AG04449 (cell line): ENCODE measurements at regions of chr22 and their contacts with region 1.

Region 1: DNA sequence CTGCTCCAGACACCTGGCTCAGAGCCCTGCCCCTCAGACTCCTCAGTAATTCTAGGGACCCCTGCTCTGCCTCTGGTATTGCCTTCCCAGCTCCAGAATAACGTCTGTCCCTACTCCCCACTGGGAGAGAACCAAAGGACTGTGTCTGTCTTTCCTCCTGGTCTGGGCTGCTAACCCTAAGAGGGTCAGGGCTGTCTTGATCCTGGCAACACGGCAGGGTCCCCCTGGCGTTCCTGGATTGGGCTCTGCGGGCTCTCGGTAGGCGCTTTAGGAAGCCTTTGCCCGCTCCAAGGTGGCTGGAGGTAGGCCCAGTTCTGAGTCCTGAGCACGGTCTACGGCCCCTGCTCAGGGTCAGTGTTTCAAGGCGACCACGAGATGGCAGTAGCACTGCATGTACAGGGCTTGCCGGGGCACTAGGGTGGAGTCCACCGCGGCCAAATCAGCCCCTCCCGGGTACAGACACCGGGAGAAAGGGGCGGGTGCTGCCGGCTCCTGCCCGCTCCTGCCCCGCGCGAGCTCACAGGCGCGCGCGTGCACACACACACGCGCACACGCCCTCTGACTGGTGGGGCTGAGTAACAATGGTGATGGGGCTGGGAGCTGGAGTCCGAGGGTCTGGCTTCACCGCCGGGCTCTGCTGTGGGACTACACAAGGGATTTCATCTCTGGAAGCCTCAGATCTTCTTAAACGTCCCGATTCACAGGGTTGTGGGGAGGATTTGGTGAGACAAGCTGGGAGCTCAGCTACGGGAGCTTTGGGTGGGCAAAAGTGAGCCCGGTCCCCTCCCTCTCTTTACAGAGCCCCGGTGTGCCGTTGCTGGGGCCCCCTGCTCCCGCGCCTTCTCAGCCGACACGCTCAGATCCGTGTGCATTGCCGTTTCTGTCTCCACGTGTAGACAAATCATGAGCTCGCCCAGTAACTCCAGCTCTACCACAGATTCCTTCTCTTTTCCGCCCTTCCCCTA is 30.1 kb upstream of the HMOX1 start:
- DNase-seq: peak; percentile 56
- H3K4me3 ChIP-seq: peak overlapping the region; percentile 69
- CTCF ChIP-seq: peak; percentile 87

Region 2: GRCh38 chr22:34804604-34805003 is 546.2 kb before region 1 on chr22:
- CTCF ChIA-PET with region 1: no interaction called
- POLR2A ChIA-PET with region 1: no interaction called
- DNase-seq: no peak
- H3K4me3 ChIP-seq: no peak overlapping the region
- CTCF ChIP-seq: no peak

Region 3: GRCh38 chr22:35128637-35129036 is 222.2 kb before region 1 on chr22:
- CTCF ChIA-PET with region 1: no interaction called
- POLR2A ChIA-PET with region 1: no interaction called
- DNase-seq: no peak
- H3K4me3 ChIP-seq: no peak overlapping the region
- CTCF ChIP-seq: no peak

Region 4: DNA sequence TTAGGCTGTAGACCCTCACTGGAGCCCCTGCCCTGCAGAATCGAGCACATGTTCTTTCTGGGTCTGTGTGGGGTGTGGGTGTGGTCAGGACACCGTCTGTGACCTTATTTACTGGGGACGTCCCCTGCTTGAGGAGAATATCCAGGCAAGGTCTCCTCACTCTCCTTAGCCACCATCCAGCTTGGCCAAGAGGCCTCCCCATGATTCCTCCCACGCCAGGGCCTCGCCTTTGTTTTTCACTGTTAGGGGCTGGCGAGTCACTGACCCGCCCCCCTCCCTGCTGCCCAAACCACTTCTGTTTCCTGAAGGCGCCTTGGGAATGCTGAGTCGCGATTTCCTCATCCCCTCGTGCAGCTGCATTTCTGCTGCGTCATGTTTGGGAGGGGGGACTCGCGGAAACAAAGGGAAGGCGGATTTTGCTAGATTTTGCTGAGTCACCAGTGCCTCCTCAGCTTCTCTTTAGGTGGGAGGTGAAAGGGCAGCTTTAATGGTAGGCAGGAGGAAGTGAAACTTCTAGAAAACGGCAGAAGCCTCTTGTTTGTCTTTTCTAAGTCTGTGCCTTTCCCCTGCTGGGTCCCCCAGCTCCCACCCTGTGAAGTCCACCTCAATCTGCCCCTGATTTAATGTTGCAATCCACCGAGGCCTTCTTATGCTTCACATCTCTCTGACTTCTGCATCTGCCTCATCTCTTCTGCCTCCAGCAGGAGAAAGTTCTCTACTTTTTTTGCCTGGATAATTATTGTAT is 26.1 kb after region 1 on chr22:
- CTCF ChIA-PET with region 1: interaction called, 15 read pairs
- POLR2A ChIA-PET with region 1: interaction called, 3 read pairs
- DNase-seq: peak; percentile 85
- H3K4me3 ChIP-seq: no peak overlapping the region; the same call in 1 of the 2 replicates
- CTCF ChIP-seq: no peak

Region 5: GRCh38 chr22:35582861-35583670 is 232.2 kb after region 1 on chr22:
- CTCF ChIA-PET with region 1: interaction called, 53 read pairs
- POLR2A ChIA-PET with region 1: no interaction called
- DNase-seq: no peak
- H3K4me3 ChIP-seq: no peak overlapping the region
- CTCF ChIP-seq: peak; percentile 88

Region 6: DNA sequence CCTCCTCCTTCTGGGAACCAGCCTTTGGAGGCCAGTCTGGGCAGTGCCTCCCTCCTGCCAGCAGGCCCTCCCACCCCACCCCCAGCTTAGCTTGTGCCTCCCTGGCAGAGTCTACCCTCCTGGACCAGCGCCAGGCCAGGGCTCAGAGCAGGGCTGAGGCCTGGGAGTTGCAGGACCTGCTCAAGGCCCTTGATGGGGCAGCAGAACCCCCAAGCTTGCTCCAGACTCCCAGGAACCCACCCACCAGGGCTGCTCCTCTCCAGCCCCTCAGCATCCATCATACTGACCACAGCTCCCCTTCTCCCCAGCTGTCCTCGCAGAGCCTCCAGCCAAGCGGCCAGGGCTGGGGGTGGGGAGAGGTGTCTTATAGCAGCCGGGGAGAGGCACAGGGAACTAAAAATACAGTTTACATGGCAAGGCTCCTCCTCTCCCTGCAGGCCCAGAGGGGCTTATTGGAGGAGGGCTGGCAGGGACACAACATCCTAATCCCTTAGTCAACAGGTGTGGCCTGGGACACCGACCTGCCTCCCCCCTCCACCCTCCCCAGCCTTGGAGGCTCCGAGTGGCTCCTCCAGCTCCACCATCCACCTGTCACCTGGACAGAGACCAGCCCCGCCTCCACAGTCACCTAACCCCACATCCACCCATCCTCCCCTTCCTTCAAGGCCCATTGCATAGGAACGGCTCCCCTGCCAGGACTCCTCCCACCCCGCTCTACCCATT is 271.5 kb after region 1 on chr22:
- CTCF ChIA-PET with region 1: interaction called, 45 read pairs
- POLR2A ChIA-PET with region 1: no interaction called
- DNase-seq: no peak
- H3K4me3 ChIP-seq: no peak overlapping the region
- CTCF ChIP-seq: no peak

Region 7: DNA sequence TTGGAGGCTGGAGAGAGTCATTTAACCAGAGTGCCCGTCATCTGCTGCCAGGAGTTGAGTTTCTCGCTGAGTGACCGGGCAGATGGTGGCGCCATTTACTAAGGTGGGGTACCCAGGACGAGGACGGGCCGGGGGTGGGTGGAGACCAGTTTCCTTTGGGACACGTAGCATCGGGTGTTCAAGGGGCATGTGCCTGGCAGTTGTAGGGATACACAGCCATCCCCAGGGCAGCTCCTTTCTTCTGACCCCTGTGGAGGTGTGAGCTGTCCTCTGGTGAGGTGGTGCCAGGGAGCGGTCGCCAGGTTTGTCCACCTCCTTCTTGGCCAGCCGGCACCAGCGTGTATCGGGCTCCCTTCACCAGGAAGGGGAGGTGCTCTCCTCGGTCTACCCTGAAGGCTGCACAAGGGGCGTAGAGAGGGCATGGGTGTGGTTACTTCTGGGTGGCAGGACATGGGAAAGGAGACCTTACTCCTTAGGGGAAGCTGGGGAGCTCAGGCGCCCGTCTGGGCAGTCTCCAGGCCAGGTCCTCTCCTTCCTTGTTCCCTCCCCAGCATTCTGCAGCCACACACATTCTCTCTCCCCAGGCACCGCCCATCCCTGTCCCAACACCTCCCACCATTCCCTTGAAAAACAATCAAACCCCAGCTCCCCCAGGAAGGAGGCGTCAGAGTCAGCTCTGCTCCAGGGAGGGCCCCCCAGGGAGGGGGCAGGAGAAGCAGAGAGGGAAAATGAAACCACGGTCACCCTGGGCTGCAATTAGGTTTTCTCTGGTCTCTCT is 276.6 kb after region 1 on chr22:
- CTCF ChIA-PET with region 1: interaction called, 45 read pairs
- POLR2A ChIA-PET with region 1: no interaction called
- DNase-seq: peak; percentile 76
- H3K4me3 ChIP-seq: peak overlapping the region; percentile 66
- CTCF ChIP-seq: peak; percentile 69